ENCODE measurements at regions of chr12 and their contacts with region 1.

Region 1: GRCh38 chr12:95003213-95003920 is at the start of gene NDUFA12:
- DNase-seq: peak; percentile 96
- H3K4me3 Mint-ChIP-seq: peak within 1 kb of the TSS; percentile 94
- H3K27ac Mint-ChIP-seq: peak within 1 kb of the TSS; percentile 83
- H3K4me1 Mint-ChIP-seq: peaks cover 14% of the 10 kb centered on the region
- H3K27me3 Mint-ChIP-seq: no peaks in the 10 kb centered on the region
- CTCF ChIP-seq: no peak
- total RNA-seq, gene NDUFA12: 112 and 124 TPM in 2 replicates

Region 2: DNA sequence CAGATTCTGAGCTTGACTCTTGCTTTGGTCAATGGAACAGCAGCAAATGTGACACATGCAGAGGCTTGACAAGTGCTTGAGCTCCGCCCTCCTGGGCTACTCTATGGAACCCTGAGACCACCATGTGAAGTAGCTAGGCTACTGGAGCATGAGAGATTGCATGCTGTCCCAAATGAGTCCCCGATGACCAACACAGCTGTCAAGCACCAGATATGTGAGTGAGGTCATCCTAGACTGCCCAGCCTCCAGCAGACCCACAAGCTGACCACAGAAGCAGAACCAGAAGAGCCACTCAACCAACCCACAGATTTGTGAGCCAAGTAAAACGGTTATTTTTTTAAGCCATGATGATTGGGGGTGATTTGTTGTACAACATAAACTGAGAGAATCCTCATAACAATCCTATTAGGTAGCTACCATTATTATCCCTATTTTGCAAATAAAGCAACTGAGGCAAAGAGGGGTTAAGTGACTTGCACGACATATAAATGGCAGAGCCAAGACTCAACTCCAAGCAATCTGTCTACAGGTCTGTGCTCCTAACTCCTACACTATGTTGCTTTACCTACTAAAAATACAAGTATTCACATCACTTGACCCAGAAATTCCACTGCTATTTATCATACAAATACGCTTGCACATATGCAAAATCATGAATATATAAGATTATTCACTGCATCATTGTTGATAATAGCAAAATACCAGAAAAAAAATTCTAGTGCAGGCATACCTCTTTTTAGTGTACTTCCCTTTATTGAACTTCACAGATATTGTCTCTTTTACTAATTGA is 136.1 kb before region 1 on chr12:
- CTCF ChIA-PET with region 1: no interaction called
- POLR2A ChIA-PET with region 1: no interaction called
- intact Hi-C with region 1: no loop called
- DNase-seq: no peak
- H3K4me3 Mint-ChIP-seq: no peak overlapping the region
- H3K27ac Mint-ChIP-seq: no peak overlapping the region
- H3K4me1 Mint-ChIP-seq: no peaks in the 10 kb centered on the region
- H3K27me3 Mint-ChIP-seq: peaks cover 12% of the 10 kb centered on the region
- CTCF ChIP-seq: no peak

Region 3: GRCh38 chr12:94954029-94954685 is 49.2 kb before region 1 on chr12:
- CTCF ChIA-PET with region 1: no interaction called
- POLR2A ChIA-PET with region 1: interaction called, 11 read pairs
- intact Hi-C with region 1: no loop called
- DNase-seq: peak; percentile 74
- H3K4me3 Mint-ChIP-seq: peak overlapping the region; percentile 17
- H3K27ac Mint-ChIP-seq: peak overlapping the region; percentile 88
- H3K4me1 Mint-ChIP-seq: peaks cover 42% of the 10 kb centered on the region
- H3K27me3 Mint-ChIP-seq: no peaks in the 10 kb centered on the region
- CTCF ChIP-seq: no peak

Region 4: DNA sequence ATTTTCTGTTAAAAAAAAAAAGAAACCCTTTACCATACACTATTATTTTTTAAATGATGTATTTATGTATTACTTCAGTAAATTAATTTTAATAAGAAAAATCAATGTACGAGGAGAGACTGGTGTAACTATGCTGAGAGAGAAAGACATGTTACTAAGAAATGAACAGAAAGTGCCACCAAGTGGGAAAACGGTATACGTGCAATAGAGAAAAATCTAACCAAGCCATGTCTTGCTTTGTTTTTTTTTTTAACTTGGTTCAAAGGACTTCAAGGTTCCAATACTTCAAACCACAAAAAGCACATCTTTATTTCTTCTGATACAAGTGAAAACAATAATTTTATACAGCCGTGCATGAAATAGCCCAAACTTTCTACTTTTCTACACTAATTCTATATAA is 22.8 kb before region 1 on chr12:
- CTCF ChIA-PET with region 1: no interaction called
- POLR2A ChIA-PET with region 1: interaction called, 11 read pairs
- intact Hi-C with region 1: no loop called
- DNase-seq: no peak
- H3K4me3 Mint-ChIP-seq: no peak overlapping the region
- H3K27ac Mint-ChIP-seq: no peak overlapping the region
- H3K4me1 Mint-ChIP-seq: peaks cover 13% of the 10 kb centered on the region
- H3K27me3 Mint-ChIP-seq: no peaks in the 10 kb centered on the region
- CTCF ChIP-seq: peak; percentile 34

Region 5: DNA sequence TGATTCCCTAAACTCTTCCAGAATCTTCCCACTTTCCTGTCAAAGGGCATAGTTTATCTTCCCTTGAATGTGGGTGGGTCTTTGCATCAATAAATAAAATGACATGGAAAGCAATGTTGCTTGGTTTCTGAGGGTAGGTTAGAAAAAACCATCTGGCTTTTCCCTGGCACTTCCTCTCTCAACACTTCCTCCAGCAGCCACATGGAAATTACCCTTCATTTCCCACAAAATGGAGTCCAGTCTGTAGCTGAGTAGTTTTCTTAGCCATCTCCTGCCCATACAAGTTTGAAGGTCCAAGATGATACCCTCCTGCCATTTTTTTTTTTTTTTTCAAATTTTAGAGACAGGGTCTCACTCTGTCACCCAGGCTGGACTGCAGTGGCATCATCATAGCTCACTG is 11.2 kb after region 1 on chr12:
- CTCF ChIA-PET with region 1: interaction called, 3 read pairs
- POLR2A ChIA-PET with region 1: interaction called, 11 read pairs
- intact Hi-C with region 1: no loop called
- DNase-seq: no peak
- H3K4me3 Mint-ChIP-seq: no peak overlapping the region
- H3K27ac Mint-ChIP-seq: no peak overlapping the region
- H3K4me1 Mint-ChIP-seq: no peaks in the 10 kb centered on the region
- H3K27me3 Mint-ChIP-seq: no peaks in the 10 kb centered on the region
- CTCF ChIP-seq: no peak

Region 6: DNA sequence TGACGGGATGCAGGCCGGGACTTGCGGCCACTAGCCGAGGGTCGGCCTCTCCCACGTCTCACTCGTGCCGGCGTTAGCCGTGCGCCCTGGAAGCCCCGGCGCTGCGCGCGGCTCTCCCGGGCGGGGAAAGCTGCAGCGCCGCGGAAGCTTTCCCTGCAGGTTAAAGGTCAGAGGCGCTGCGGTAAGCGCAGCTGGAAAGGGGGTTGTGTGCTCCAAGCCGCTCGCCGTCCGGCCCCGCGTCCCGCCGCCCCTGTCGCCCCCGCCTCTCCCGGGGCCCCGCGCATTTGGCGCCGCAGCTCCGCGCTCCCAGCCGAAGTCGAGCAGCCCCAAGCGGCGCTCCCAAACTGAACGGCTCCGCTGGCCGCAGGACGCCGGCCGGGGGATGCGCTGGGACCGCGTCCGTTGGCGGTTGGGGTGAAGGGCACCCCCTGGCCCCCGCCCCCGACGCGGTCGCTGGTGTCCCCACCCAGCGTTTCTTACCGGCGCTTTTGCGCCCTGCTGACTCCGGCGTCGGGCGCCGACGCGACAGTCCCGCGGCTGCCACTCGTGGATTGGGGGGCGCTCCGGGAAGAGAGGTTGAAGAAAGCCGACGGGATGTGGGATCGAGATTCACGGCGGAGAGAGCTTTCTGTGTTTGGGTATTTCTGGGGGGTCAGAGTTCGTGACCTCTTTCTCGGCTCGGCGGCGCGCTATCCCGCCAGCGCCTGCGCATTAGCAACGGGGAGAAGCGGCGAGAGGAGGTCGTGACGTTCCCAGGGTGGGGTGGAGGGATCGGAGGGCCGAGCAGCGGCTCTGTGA is 69.7 kb after region 1 on chr12 and contains the start of gene NR2C1:
- CTCF ChIA-PET with region 1: interaction called, 3 read pairs
- POLR2A ChIA-PET with region 1: interaction called, 18 read pairs
- intact Hi-C with region 1: no loop called
- DNase-seq: peak; percentile 92
- H3K4me3 Mint-ChIP-seq: peak within 1 kb of the TSS; percentile 88
- H3K27ac Mint-ChIP-seq: peak within 1 kb of the TSS; percentile 59
- H3K4me1 Mint-ChIP-seq: peaks cover 4% of the 10 kb centered on the region
- H3K27me3 Mint-ChIP-seq: no peaks in the 10 kb centered on the region
- CTCF ChIP-seq: no peak
- total RNA-seq, gene NR2C1: 29.0 and 35.2 TPM in 2 replicates

Measured in MCF 10A (cell line).